Right ventricle myocardium inferior (tissue), 1 donor: ENCODE measurements at regions of chr11 and their contacts with region 1.

Region 1: GRCh38 chr11:1694064-1694845 is 2.7 kb upstream of the KRTAP5-6 start:
- DNase-seq: peak; percentile 94
- ATAC-seq: peak; percentile 96

Region 2: DNA sequence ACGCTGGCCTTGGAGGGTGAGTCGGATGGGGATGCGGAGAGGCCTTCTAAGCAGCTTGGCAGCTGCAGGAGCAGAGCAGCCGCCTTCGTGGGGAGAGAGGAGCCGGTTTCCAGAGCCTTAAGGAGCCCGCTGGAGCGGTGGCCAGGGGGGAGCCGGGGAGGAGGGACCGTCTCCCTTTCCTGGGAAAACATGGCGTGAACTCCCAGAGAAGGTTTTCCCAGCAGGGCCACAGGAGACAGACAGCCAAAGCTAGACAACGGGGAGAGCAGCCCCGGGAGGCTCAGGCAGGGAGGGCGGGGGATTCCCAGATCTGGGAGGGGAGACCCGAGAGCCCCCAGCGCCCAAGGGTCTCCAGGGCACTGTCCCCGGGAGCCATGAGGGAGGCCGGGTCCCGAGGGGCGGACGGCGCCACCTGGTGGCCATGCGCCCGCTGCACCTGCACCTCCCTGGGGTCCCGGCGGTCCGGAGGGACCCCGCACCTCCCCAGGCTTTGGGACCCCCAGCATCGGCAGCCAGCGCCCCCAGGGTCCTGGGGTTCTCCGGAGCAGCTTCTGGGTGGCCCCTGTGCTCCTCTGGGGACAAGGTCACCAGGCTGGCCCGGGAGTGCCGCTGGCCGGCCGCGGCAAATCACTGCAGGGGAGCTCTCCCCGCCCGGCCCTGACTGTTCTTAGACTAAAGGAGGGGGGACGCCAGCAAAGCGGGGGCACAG is 138.1 kb after region 1 on chr11:
- intact Hi-C with region 1: loop called (anchors 1 kb)
- DNase-seq: peak; percentile 83
- ATAC-seq: peak; percentile 80

Region 3: DNA sequence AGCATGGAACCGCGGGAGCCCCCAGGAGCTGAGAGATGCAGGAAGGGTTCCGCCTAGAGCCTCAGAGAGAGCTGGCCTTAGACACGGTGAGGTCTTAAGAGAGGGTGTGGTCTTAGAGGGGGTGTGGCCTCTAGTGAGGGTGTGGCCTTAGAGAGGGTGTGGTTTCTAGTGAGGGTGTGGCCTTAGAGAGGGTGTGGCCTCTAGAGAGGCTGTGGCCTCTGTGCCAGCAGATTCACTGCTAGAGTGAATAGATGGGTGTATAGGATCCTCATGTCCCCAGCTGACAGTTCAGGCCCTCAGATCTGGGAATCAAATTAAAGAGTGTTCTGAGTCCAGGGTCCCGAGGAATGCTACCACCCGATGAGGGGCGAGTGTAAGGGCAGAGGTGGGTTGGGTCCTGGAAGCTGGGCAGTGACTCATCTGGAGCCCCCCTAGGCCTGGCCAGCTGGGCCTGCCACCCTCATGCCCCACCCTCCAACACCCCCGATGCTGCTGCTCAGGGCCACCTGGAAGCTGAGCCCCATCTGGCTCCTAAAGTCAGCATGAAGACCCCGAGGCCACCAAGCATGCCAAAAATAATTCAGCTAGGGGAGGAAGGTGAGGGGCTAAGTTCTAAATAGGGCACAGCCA is 395.4 kb after region 1 on chr11:
- intact Hi-C with region 1: no loop called
- DNase-seq: no peak
- ATAC-seq: no peak